ENCODE measurements at regions of chr19 and their contacts with region 1.

Region 1: GRCh38 chr19:51926784-51927742 is at the start of gene ZNF613:
- DNase-seq: peak; percentile 95
- total RNA-seq, gene ZNF613: 6.7 to 7.0 TPM

Region 2: DNA sequence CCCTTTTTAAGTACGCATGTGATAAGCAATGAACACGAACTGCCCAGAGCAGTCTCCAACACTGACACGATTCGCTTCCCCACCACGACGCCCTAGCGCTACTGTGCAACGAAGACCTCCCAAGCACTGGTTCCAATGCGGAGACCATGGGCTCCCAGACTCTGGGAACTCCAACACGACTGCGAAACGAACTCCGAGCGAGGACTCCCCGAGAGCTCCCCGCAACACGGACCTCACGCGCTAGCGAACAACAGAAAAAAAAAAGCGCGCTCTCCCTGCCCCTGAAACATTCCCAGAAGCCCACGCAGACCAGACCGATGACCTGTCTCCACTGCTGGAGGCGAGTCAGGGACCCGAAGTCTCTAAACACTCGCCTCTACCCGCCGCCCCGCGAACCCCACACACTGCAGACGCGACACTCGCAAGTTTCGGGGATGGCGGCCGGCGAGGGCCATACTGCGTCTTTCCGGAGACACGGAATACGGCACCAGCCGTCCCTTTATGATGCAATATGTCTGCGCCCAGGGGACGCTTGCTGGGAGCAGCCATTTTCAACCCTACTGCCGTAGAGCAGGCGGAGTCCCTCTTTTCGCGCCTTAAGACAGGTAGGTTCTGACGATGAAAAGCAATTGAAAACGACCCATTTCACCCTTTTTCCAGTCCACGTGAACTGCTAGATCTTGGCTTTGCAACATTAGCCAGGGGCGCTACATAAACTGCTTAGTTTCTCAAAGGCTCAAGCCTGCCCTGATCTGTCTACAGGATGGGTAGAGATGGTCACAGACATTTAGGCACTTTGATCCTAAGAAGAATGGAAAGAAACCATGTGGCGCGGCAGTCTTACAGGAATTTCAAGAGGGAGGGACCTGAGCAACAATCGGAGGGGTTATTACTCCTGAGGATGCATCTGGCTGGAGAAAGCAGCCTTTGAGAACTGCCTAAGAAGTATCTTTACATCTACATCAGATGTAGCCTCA is 39.3 kb before region 1 on chr19 and contains the start of gene ZNF577:
- intact Hi-C with region 1: loop called in 1 of 2 experiments (anchors 1 kb)
- DNase-seq: peak; percentile 96
- total RNA-seq, gene ZNF577: 9.3 to 10.0 TPM

Region 3: GRCh38 chr19:51971624-51972023 is 44.6 kb after region 1 on chr19:
- intact Hi-C with region 1: no loop called
- DNase-seq: no peak